HepG2 (cell line): ENCODE measurements at regions of chr2 and their contacts with region 1.

Region 1: GRCh38 chr2:171598713-171599319 is 76.5 kb downstream of the CYBRD1 start:
- DNase-seq: peak; percentile 72
- ATAC-seq: peak; percentile 99
- H3K4me3 ChIP-seq: no peak overlapping the region
- H3K27ac ChIP-seq: no peak overlapping the region
- H3K4me1 ChIP-seq: no peaks in the 10 kb centered on the region
- H3K27me3 ChIP-seq: peaks cover 3 to 9% of the 10 kb centered on the region in 2 experiments; a peak in 4 of 5 replicates
- CTCF ChIP-seq: peak; percentile 83
- EP300 ChIP-seq: no peak
- POLR2A ChIP-seq: no peak
- RAD21 ChIP-seq: 0 out of 2 replicates have a peak, but pooled peaks have one; percentile 46

Region 2: DNA sequence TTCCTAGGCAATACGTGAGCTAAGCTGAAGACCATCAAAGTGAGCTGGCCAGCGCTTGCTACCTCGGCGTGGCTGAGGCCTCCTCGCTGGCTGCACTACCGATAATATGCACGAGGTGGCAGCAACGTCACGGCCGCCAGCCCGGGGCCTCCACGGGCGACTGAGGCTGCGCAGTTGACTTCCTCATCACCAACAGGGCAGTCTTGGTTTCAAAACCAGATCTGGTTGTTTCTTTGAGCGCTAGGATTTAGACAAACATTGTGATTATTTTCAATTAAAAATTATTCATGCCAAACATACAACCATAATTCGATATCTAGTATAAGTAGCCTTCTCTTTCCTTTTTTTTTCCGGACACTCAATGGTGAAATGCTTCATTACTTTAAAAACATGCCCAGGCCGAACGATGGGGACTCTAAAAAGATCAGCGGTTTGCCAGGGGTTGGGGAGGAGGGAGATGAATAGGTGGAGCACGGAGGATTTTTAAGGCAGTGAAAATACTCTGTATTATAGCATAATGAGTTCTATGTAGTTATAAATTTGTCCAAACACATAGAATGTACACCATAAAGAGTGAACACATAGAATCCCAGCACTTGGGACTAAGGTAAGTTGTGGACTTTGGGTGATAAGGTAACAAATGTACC is 24.5 kb before region 1 on chr2:
- CTCF ChIA-PET with region 1: no interaction called
- POLR2A ChIA-PET with region 1: no interaction called
- in situ Hi-C with region 1: no loop called
- intact Hi-C with region 1: loop called (anchors 1 kb)
- DNase-seq: peak; percentile 66
- ATAC-seq: peak; percentile 99
- H3K4me3 ChIP-seq: peak overlapping the region; percentile 28 to 60 (median 60); a peak in 5 of 6 replicates
- H3K27ac ChIP-seq: no peak overlapping the region
- H3K4me1 ChIP-seq: peaks cover 7% of the 10 kb centered on the region; the same call in 1 of the 2 replicates
- H3K27me3 ChIP-seq: peaks cover 0 to 36% of the 10 kb centered on the region in 2 experiments; a peak in 2 of 5 replicates
- CTCF ChIP-seq: peak; percentile 97
- EP300 ChIP-seq: no peak
- POLR2A ChIP-seq: no peak
- RAD21 ChIP-seq: peak; percentile 95

Region 3: DNA sequence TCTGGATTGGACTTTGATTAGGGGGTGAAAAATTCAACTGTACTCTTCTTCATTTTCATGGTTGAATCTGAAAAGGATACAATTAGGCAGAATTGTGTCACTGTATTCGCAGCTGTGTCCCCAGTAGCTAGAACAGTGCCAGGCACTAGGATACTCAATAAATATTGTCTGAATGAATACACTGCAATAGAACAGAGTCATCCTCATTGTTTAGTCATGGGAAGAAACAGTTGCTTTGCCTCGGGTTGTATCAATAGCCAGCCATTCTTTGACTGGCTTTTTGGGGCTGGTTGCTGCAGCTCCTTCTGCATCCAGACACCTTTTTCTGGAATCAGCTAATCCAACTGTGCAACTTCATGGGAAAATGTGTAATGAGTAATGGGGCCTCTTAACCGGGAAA is 70.3 kb after region 1 on chr2:
- CTCF ChIA-PET with region 1: no interaction called
- POLR2A ChIA-PET with region 1: no interaction called
- in situ Hi-C with region 1: no loop called
- intact Hi-C with region 1: loop called (anchors 5 kb)
- DNase-seq: no peak
- ATAC-seq: no peak
- H3K4me3 ChIP-seq: no peak overlapping the region
- H3K27ac ChIP-seq: no peak overlapping the region
- H3K4me1 ChIP-seq: no peaks in the 10 kb centered on the region
- H3K27me3 ChIP-seq: peaks cover 0 to 29% of the 10 kb centered on the region in 2 experiments; a peak in 3 of 5 replicates
- CTCF ChIP-seq: no peak
- EP300 ChIP-seq: no peak
- POLR2A ChIP-seq: no peak
- RAD21 ChIP-seq: no peak

Region 4: GRCh38 chr2:171687287-171688128 is 88.7 kb after region 1 on chr2 and contains the start of gene DYNC1I2:
- CTCF ChIA-PET with region 1: no interaction called
- POLR2A ChIA-PET with region 1: no interaction called
- in situ Hi-C with region 1: no loop called
- intact Hi-C with region 1: loop called (anchors 1 kb)
- DNase-seq: peak; percentile 95
- ATAC-seq: peak; percentile 99
- H3K4me3 ChIP-seq: peak within 1 kb of the TSS; percentile 86 to 99 (median 95)
- H3K27ac ChIP-seq: peak within 1 kb of the TSS; percentile 70
- H3K4me1 ChIP-seq: peaks cover 12% of the 10 kb centered on the region
- H3K27me3 ChIP-seq: peaks cover 0 to 10% of the 10 kb centered on the region in 2 experiments; a peak in 1 of 5 replicates
- CTCF ChIP-seq: peak; percentile 18; the same call in 1 of the 2 replicates
- EP300 ChIP-seq: peak in 1 of 2 experiments; percentile 13; a peak in 1 of 4 replicates
- POLR2A ChIP-seq: peak; percentile 72 to 82
- RAD21 ChIP-seq: no peak; the same call in 1 of the 2 replicates
- total RNA-seq, gene DYNC1I2: 84.0 and 125 TPM in 2 replicates

Region 5: DNA sequence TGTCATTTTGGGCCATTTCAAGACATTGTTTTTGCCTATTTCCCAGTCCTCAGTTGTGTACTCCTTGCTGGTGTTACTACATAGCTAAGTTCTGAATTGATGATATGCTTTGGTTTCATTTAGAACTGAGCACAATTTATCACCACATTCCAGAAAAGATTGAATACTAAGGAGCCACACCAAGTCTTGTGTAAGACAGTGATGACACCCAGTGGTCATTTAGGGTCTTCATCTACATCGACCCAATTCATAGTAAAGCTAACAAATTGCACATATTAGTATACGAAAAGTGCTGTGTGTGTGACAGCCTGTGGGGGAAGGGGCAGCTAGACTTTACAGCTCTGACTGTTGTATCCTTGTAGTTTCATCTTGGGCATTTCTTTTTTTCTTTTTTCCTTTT is 514.8 kb after region 1 on chr2:
- CTCF ChIA-PET with region 1: no interaction called
- POLR2A ChIA-PET with region 1: no interaction called
- in situ Hi-C with region 1: no loop called
- intact Hi-C with region 1: loop called (anchors 2 kb)
- DNase-seq: peak; percentile 60
- ATAC-seq: peak; percentile 52
- H3K4me3 ChIP-seq: no peak overlapping the region
- H3K27ac ChIP-seq: no peak overlapping the region
- H3K4me1 ChIP-seq: peaks cover 31% of the 10 kb centered on the region
- H3K27me3 ChIP-seq: peaks cover under 1 to 7% of the 10 kb centered on the region in 2 experiments; a peak in 2 of 5 replicates
- CTCF ChIP-seq: peak; percentile 81
- EP300 ChIP-seq: no peak
- POLR2A ChIP-seq: no peak
- RAD21 ChIP-seq: peak; percentile 17; the same call in 1 of the 2 replicates

Region 6: GRCh38 chr2:172128484-172128883 is 529.7 kb after region 1 on chr2:
- CTCF ChIA-PET with region 1: interaction called, 14 read pairs
- POLR2A ChIA-PET with region 1: no interaction called
- in situ Hi-C with region 1: no loop called
- intact Hi-C with region 1: loop called (anchors 1 kb)
- DNase-seq: no peak
- ATAC-seq: no peak
- H3K4me3 ChIP-seq: no peak overlapping the region
- H3K27ac ChIP-seq: no peak overlapping the region
- H3K4me1 ChIP-seq: no peaks in the 10 kb centered on the region
- H3K27me3 ChIP-seq: no peaks in the 10 kb centered on the region; a peak in 1 of 5 replicates
- CTCF ChIP-seq: no peak
- EP300 ChIP-seq: no peak
- POLR2A ChIP-seq: no peak
- RAD21 ChIP-seq: no peak